SK-N-SH (cell line): ENCODE measurements at regions of chr2 and their contacts with region 1.

Region 1: GRCh38 chr2:160994141-160995002 is 165.9 kb upstream of the TANK start:
- DNase-seq: peak; percentile 57
- H3K4me3 ChIP-seq: no peak overlapping the region; a peak in 1 of 4 replicates
- H3K27ac ChIP-seq: no peak overlapping the region
- H3K4me1 ChIP-seq: peaks cover 0 to 2% of the 10 kb centered on the region in 2 experiments; a peak in 1 of 4 replicates
- H3K27me3 ChIP-seq: no peaks in the 10 kb centered on the region
- CTCF ChIP-seq: peak; percentile 91
- EP300 ChIP-seq: no peak
- RAD21 ChIP-seq: peak; percentile 96

Region 2: GRCh38 chr2:160252278-160252887 is 742.0 kb before region 1 on chr2:
- CTCF ChIA-PET with region 1: interaction called, 47 read pairs
- POLR2A ChIA-PET with region 1: no interaction called
- DNase-seq: peak; percentile 51
- H3K4me3 ChIP-seq: no peak overlapping the region
- H3K27ac ChIP-seq: no peak overlapping the region; a peak in 1 of 4 replicates
- H3K4me1 ChIP-seq: peaks cover 0 to 16% of the 10 kb centered on the region in 2 experiments; a peak in 2 of 4 replicates
- H3K27me3 ChIP-seq: no peaks in the 10 kb centered on the region
- CTCF ChIP-seq: peak; percentile 84
- EP300 ChIP-seq: no peak
- RAD21 ChIP-seq: peak; percentile 70

Region 3: DNA sequence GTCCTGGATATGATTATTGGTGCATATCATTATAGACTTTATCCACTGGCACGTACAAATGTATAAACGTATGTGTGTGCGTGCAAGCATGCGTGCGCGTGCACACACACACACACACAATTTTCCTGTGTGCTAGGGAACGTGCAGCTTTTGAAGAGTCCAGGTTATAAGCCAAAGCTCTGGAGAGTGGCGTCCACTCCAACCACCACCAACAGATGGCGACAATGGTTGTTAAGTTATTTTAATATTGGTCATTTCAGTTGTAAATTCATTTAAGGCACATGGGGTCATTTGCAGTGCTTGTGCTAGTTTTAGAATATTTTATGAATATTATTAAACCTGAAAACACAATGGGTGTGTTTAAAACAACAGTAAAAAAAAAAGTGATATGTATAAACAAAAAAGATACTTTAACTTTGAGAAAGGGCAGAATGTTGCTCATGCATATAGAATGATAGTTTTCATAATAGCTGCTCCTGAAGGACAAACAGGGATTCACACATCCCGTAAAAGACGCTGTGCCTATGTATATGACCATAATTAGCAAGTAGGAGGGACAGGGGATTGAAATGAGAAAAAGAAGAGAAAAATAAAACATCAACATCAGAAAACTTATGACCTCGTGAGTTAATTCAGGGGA is 670.1 kb before region 1 on chr2:
- CTCF ChIA-PET with region 1: interaction called, 50 read pairs
- POLR2A ChIA-PET with region 1: no interaction called
- DNase-seq: peak; percentile 39
- H3K4me3 ChIP-seq: no peak overlapping the region
- H3K27ac ChIP-seq: 0 out of 4 replicates have a peak overlapping the region, but pooled peaks of 1 of the 2 experiments have one; percentile 20
- H3K4me1 ChIP-seq: peaks cover 0 to 3% of the 10 kb centered on the region in 2 experiments; a peak in 3 of 4 replicates
- H3K27me3 ChIP-seq: no peaks in the 10 kb centered on the region
- CTCF ChIP-seq: peak; percentile 81
- EP300 ChIP-seq: no peak
- RAD21 ChIP-seq: peak; percentile 80

Region 4: DNA sequence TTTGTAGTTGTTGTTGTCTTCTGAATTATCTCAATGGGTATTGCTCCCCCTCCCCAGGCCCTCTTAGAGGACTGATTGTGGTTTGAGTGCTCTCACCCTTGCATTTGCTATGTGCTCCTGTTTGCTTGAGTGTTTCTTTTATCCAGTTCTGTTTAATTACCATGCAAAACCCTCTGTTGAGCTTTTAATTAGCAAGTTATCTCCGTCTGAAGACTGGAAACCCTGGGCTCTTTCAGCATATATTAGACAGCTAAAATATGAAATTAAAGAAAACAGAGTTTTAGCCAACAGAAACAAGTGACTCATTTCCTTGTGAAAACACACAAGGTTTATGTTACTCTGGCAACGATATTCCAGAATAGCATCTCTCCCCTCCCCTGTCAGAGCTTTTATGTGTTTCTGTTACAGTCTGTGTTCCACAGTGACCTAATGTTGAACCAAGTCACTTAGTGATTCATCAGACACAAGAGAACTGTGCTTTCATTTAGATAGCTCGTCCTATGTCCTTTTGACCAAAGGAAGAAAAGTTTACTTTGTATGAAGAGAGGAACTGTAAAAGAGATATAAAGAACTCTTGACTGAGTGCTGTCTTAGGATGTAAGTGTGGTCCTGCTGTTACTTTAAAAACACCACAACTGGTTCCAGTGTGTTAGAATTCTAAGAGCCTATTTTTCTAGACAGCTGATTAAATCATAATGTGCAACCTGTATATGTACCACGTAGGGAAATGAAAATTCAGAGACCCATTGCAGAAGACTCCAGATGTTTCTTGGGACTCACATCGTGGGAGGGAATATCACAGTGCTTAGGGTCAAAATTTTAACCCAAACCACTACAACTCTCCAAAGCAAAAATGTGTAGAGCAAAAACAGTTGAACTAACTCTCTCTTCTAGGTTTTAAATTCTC is 328.0 kb before region 1 on chr2:
- CTCF ChIA-PET with region 1: no interaction called
- POLR2A ChIA-PET with region 1: no interaction called
- DNase-seq: peak; percentile 33
- H3K4me3 ChIP-seq: peak overlapping the region; percentile 27 to 45; a peak in 3 of 4 replicates
- H3K27ac ChIP-seq: peak overlapping the region; percentile 89 to 98
- H3K4me1 ChIP-seq: peaks cover 8 to 16% of the 10 kb centered on the region in 2 experiments; a peak in 3 of 4 replicates
- H3K27me3 ChIP-seq: no peaks in the 10 kb centered on the region
- CTCF ChIP-seq: no peak
- EP300 ChIP-seq: peak; percentile 63 to 96
- RAD21 ChIP-seq: peak; percentile 7; the same call in 1 of the 2 replicates

Region 5: DNA sequence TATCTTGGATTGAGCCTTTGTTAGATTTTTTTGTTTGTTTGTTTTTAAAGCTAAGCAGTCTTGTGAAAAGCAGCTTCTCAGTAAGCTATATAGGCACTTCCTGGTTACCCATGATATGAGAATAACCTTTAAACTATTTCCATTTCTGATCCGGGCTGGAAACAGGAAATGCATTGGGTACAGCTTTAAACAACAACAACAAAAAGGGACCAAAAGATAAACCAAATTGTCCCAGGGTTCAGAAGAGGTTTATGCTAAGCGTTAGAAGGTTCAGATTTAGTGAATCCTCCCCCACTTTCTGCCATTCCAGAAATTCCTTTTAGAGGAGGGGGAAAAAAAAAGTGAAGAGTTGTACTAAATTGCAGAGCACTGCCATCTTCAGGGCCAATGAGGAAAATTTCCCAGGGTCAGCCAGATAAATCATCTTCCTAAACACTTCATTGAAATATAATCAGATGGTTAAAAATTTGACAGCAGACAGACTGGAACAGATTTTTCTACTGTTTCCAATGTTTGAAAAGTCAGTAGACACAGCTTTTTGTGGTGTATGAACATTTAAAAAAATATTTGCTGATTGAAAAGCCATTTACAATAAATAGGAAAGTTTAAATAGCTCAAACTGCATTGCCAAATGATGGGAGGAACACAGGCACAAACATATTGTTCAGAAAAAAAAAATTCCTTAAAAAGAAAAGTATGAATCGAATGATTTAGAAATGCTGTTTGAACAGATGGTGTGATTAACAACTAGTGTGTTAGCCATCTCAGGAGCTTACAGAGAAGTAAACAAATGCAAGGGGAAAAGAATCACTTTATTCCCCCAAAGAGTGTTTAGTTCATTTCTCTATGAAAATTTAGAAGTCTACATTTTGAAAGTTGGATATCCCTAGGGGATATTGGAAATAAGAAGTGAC is 24.1 kb before region 1 on chr2:
- CTCF ChIA-PET with region 1: interaction called, 25 read pairs
- POLR2A ChIA-PET with region 1: no interaction called
- DNase-seq: peak; percentile 69
- H3K4me3 ChIP-seq: no peak overlapping the region
- H3K27ac ChIP-seq: peak overlapping the region; percentile 62 to 75; a peak in 3 of 4 replicates
- H3K4me1 ChIP-seq: peaks cover 0 to 6% of the 10 kb centered on the region in 2 experiments; a peak in 2 of 4 replicates
- H3K27me3 ChIP-seq: no peaks in the 10 kb centered on the region
- CTCF ChIP-seq: peak; percentile 87
- EP300 ChIP-seq: no peak
- RAD21 ChIP-seq: peak; percentile 93

Region 6: DNA sequence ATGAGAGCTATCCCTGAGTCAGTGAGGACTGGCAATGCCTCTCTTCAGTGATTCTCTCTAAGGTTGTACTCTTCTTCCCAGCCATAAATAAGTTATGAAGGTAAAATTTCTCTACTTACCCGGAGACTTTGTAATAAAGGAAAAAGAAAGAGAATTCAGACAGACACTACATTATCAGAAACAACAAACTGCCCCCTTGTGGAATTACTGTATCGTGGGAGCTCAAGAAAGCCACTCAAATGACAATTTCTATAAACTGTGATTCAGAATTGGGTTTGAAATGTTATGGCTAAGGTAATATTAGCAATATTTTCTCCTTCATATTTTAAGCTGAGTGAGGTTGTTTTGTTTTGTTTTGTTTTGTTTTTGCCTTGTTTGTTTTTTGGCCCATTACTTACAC is 10.0 kb after region 1 on chr2:
- CTCF ChIA-PET with region 1: interaction called, 29 read pairs
- POLR2A ChIA-PET with region 1: no interaction called
- DNase-seq: peak; percentile 28
- H3K4me3 ChIP-seq: no peak overlapping the region
- H3K27ac ChIP-seq: no peak overlapping the region
- H3K4me1 ChIP-seq: no peaks in the 10 kb centered on the region
- H3K27me3 ChIP-seq: no peaks in the 10 kb centered on the region
- CTCF ChIP-seq: peak; percentile 61
- EP300 ChIP-seq: no peak
- RAD21 ChIP-seq: peak; percentile 54